ENCODE measurements at regions of chr15 and their contacts with region 1.

Region 1: GRCh38 chr15:52256366-52256765 is 39.2 kb downstream of the MYO5C start:
- DNase-seq: no peak
- H3K4me3 ChIP-seq: no peak overlapping the region
- CTCF ChIP-seq: peak; percentile 71

Region 2: GRCh38 chr15:51971375-51972133 is 284.8 kb before region 1 on chr15 and contains the start of gene LEO1:
- CTCF ChIA-PET with region 1: no interaction called
- POLR2A ChIA-PET with region 1: no interaction called
- DNase-seq: peak; percentile 93
- H3K4me3 ChIP-seq: peak within 1 kb of the TSS; percentile 91
- CTCF ChIP-seq: peak; percentile 55

Region 3: DNA sequence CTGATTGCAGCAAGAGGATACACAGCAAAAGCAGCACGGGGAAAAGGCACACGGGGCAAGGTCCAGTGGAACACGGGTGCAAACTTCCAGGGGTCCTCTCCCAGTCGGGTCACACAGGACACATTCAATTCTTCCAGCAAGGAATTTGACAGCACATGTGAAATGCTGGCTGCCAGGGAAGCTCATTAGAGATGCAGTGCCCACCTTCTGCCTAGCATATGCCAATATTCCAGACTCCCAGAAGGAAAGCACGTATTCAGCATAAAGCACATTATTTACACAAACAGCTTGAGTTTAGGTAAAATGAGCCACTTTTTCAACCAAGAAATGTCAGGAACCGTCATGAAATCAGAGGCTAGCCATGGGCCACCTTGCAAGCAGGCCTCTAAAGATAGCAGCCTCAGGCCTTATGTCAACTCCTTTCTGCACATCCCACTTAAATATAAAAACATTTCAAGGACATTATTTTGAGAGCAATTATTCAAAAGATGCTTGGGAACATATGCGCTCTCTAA is 19.9 kb after region 1 on chr15:
- CTCF ChIA-PET with region 1: interaction called, 11 read pairs
- POLR2A ChIA-PET with region 1: interaction called, 3 read pairs
- DNase-seq: no peak
- H3K4me3 ChIP-seq: no peak overlapping the region
- CTCF ChIP-seq: no peak

Region 4: GRCh38 chr15:52727815-52728214 is 471.4 kb after region 1 on chr15:
- CTCF ChIA-PET with region 1: interaction called, 256 read pairs
- POLR2A ChIA-PET with region 1: no interaction called
- DNase-seq: no peak
- H3K4me3 ChIP-seq: no peak overlapping the region
- CTCF ChIP-seq: no peak

Region 5: GRCh38 chr15:52735231-52736089 is 479.1 kb after region 1 on chr15:
- CTCF ChIA-PET with region 1: interaction called, 256 read pairs
- POLR2A ChIA-PET with region 1: interaction called, 3 read pairs
- DNase-seq: peak; percentile 5
- H3K4me3 ChIP-seq: no peak overlapping the region
- CTCF ChIP-seq: peak; percentile 48